ENCODE measurements at regions of chr2 and their contacts with region 1.

Region 1: GRCh38 chr2:44055229-44055628 is 59.4 kb upstream of the LRPPRC start:
- DNase-seq: no peak

Region 2: DNA sequence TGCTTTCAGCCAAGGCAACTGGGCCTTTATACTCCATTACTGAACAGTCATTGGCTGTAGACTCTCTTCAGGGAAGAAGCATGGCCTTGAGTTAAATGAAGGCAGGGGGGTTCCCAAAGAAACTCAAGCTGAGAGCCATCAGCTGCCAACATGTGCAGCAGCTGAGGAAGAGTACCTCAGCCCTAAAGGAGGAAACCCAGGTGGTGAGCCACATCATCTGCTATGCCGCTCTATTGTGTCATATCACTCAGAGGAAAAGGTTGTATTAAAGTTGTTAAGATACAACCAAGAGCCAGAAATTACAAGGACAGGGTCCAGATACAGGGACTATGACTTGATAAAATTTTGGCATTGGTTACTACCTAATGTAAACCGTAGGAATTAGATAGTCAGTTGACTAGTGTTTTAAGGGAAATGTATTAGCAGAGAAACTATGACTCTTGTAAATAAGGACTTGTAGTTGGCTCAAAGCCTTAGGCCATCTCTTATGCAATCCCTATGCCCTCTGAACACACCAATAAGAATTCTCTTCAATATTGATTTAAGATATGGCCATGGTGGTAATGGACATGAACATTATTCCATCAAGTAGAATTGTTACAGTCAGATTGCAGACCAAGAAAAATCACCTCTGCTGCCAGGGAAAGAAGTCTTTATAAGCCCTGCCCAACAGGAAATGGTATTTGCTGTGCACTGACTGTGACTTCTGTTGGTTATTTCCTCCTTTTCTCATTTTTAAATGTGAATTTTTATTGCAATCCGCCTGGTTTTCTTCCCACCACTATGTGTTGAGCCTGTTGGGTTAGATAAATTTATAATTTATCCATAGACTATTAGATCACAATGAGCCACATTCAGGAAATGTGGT is 50.3 kb before region 1 on chr2:
- intact Hi-C with region 1: no loop called
- DNase-seq: no peak

Region 3: GRCh38 chr2:44310287-44310686 is 255.1 kb after region 1 on chr2:
- intact Hi-C with region 1: no loop called
- DNase-seq: no peak

Region 4: GRCh38 chr2:44949329-44950151 is 894.3 kb after region 1 on chr2:
- intact Hi-C with region 1: loop called in 1 of 2 experiments (anchors 5 kb)
- DNase-seq: peak; percentile 78

Region 5: DNA sequence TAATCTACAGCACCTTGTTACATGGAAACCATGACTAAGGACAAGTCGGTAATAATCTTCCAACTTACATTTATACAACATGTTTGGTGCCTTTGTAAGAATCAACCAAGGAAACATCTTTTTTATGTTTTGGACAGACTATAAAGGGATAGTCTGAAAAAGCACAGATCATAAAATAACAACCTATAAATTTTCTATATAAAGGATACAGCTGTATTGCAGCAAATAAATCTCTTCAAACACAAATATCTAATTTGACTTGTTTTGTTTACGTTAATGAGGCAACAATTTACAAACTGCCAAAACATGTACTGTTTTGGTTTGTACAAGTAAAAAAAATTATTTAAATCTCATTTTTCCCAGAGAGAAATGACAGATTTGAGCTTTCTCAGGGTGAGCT is 1463.3 kb after region 1 on chr2:
- intact Hi-C with region 1: loop called in 1 of 2 experiments (anchors 5 kb)
- DNase-seq: no peak